ENCODE measurements at regions of chr15 and their contacts with region 1.

Region 1: DNA sequence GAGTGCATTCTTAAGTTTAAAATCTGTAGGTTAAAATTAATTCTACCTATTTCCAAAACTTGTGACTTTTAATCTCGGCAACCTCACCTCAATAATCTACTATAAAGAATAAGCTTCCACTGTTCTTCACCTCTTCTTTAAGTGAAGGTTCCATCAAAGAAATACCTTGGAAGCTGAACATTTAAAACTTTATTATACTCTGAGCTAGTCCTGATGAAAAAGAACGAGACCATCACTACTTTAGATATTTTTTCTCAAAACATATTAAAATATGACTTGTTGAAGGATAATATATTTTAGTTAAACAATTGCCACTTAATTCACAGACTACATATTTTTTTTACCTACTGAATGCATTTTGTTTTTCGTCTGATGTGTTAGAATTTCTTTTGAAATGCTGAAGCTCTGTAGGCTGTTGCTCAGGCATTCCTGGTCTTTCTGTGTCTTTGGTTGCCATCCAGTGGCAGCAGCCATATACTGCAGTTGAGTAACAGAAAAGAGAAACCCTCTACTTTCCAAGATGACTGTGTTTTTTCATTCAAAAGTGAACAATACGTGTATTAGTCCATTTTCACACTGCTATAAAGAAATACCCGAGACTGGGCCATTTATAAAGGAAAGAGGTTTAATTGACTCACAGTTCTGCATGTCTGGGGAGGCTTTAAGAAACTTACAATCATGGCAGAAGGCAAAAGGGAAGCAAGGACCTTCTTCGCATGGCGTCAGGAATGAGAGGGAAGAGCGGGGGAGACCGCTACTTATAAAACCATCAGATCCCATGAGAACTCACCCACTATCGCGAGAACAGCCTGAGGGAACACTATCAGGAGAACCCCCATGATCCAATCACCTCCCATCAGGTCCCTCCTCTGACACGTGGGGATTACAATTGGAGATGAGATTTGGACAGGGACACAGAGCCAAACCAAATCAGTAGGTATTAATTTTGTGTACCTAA is 4.5 kb upstream of the GOLGA8B start:
- DNase-seq: peak in 2 of 4 donors; percentile 53 to 67
- ATAC-seq: peak; percentile 82
- H3K4me3 ChIP-seq: no peak overlapping the region
- H3K27ac ChIP-seq: no peak overlapping the region
- H3K4me1 ChIP-seq: peaks cover 0 to 9% of the 10 kb centered on the region in 2 donors
- H3K27me3 ChIP-seq: peaks cover 0 to 24% of the 10 kb centered on the region in 2 donors
- CTCF ChIP-seq: peak; percentile 66

Region 2: GRCh38 chr15:34065941-34066340 is 522.1 kb before region 1 on chr15:
- intact Hi-C with region 1: loop called in 1 of 2 experiments (anchors 5 kb)
- DNase-seq: no peak
- ATAC-seq: no peak
- H3K4me3 ChIP-seq: no peak overlapping the region
- H3K27ac ChIP-seq: no peak overlapping the region
- H3K4me1 ChIP-seq: peaks cover 0 to 6% of the 10 kb centered on the region in 2 donors
- H3K27me3 ChIP-seq: no peaks in the 10 kb centered on the region
- CTCF ChIP-seq: no peak

Region 3: GRCh38 chr15:34437687-34438086 is 150.3 kb before region 1 on chr15 and contains the start of gene GOLGA8A:
- intact Hi-C with region 1: no loop called
- DNase-seq: peak in 3 of 4 donors; percentile 61 to 89 (median 86)
- ATAC-seq: no peak
- H3K4me3 ChIP-seq: peak within 1 kb of the TSS in 1 of 2 donors; percentile 49
- H3K27ac ChIP-seq: no peak within 1 kb of the TSS
- H3K4me1 ChIP-seq: peaks cover 0 to 14% of the 10 kb centered on the region in 2 donors
- H3K27me3 ChIP-seq: peaks cover 0 to 62% of the 10 kb centered on the region in 2 donors
- CTCF ChIP-seq: no peak
- polyA plus RNA-seq, gene GOLGA8A: 134 to 318 (median 254) TPM

Region 4: GRCh38 chr15:34655326-34655725 is 67.3 kb after region 1 on chr15:
- intact Hi-C with region 1: no loop called
- DNase-seq: no peak
- ATAC-seq: no peak
- H3K4me3 ChIP-seq: no peak overlapping the region
- H3K27ac ChIP-seq: no peak overlapping the region
- H3K4me1 ChIP-seq: no peaks in the 10 kb centered on the region
- H3K27me3 ChIP-seq: no peaks in the 10 kb centered on the region
- CTCF ChIP-seq: no peak

Measured in left lung (tissue), 14 donors.